ENCODE measurements at regions of chr17 and their contacts with region 1.

Region 1: DNA sequence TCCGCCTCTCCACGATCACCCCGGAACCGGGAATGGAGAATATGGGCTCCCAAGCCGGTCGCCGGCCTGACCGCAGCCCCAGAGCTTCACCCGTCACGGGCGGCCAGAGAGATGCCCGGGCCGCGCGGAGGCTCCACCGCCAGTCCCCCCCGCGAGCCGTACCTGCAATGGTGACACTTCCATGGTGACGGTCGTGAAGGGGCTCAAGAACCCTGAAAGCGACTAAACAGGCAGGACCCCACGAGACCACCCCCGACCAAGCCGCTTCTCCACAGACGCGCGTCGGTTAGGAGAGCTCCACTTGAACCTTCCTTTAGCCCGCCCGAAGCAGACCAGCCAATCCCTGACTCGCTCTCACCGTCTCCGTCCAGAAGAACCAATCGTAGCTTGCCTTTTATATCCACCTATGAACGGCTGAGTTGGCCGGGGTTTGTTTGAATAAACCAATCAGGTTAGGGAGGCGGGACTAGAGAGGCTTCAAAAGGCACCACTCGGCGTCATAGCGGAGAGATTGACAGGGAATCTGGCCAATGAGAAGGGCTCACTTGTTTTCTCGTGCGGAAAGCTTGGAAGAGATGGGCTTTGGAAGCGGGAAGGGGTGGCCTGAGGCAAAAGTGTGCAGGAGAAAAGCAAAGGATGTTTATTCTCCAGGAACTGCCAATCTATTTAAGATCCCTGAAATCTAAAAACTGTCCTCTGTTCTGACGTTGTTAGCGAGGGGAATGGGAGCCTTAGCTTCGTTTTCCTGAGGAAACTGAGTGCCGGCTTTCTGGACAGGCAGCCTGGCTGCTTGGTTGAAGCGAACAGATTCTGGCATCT is at the start of gene TOP2A:
- DNase-seq: peak; percentile 91
- ATAC-seq: peak; percentile 100
- H3K4me3 Mint-ChIP-seq: peak within 1 kb of the TSS; percentile 94
- H3K27ac Mint-ChIP-seq: peak within 1 kb of the TSS; percentile 84
- H3K4me1 Mint-ChIP-seq: peaks cover 23% of the 10 kb centered on the region
- H3K27me3 Mint-ChIP-seq: no peaks in the 10 kb centered on the region
- CTCF ChIP-seq: no peak
- total RNA-seq, gene TOP2A: 5.3 and 6.6 TPM in 2 replicates

Region 2: DNA sequence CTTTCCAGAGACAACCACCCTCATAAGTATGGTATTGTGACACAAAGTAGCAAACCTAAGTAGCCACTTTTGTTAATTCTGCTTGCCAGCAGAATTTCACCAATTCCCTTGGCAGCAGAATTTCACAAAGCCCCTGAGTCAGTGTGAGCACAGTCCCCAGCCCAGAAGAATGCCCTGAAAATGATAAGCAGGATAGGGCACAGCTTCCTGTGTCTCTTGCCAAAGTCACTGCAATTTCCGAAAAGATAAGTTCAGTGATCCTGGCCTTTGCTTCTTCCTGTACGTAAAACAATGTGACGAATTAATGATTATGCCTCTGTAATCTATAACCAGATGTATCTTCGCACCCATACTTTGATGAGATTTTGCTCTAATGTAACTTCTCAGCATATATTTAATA is 214.7 kb before region 1 on chr17:
- CTCF ChIA-PET with region 1: no interaction called
- POLR2A ChIA-PET with region 1: no interaction called
- intact Hi-C with region 1: loop called (anchors 5 kb)
- DNase-seq: no peak
- ATAC-seq: no peak
- H3K4me3 Mint-ChIP-seq: no peak overlapping the region
- H3K27ac Mint-ChIP-seq: no peak overlapping the region
- H3K4me1 Mint-ChIP-seq: peaks cover 4% of the 10 kb centered on the region
- H3K27me3 Mint-ChIP-seq: no peaks in the 10 kb centered on the region
- CTCF ChIP-seq: no peak

Region 3: GRCh38 chr17:40303009-40303657 is 114.7 kb before region 1 on chr17:
- CTCF ChIA-PET with region 1: interaction called, 31 read pairs
- POLR2A ChIA-PET with region 1: interaction called, 3 read pairs
- intact Hi-C with region 1: loop called (anchors 1 kb)
- DNase-seq: no peak
- ATAC-seq: peak; percentile 83
- H3K4me3 Mint-ChIP-seq: no peak overlapping the region
- H3K27ac Mint-ChIP-seq: no peak overlapping the region
- H3K4me1 Mint-ChIP-seq: peaks cover 7% of the 10 kb centered on the region
- H3K27me3 Mint-ChIP-seq: no peaks in the 10 kb centered on the region
- CTCF ChIP-seq: no peak

Region 4: DNA sequence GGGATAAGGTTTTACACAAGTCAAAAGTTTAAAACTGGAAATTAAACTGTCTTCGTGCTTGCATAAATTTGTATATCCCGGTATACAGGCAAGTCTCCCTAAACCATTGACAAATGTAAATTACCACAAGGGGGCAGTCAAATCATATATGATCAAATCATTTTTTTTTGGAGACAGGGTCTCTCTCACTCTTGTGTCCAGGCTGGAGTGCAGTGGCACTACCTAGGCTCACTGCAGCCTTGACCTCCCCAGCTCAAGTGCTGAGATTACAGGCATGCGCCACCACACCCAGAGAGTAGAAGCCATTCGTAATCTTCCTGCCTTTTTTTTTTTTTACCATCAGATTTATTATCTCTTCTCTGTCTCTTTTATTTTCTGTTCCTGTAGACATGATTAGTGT is 18.6 kb before region 1 on chr17:
- CTCF ChIA-PET with region 1: interaction called, 3 read pairs
- POLR2A ChIA-PET with region 1: no interaction called
- intact Hi-C with region 1: loop called (anchors 2 kb)
- DNase-seq: no peak
- ATAC-seq: peak; percentile 61
- H3K4me3 Mint-ChIP-seq: no peak overlapping the region
- H3K27ac Mint-ChIP-seq: no peak overlapping the region
- H3K4me1 Mint-ChIP-seq: peaks cover 15% of the 10 kb centered on the region
- H3K27me3 Mint-ChIP-seq: no peaks in the 10 kb centered on the region
- CTCF ChIP-seq: no peak

Region 5: GRCh38 chr17:40818733-40819527 is 401.1 kb after region 1 on chr17:
- CTCF ChIA-PET with region 1: no interaction called
- POLR2A ChIA-PET with region 1: no interaction called
- intact Hi-C with region 1: loop called (anchors 10 kb)
- DNase-seq: peak; percentile 79
- ATAC-seq: peak; percentile 89
- H3K4me3 Mint-ChIP-seq: peak overlapping the region; percentile 87
- H3K27ac Mint-ChIP-seq: peak overlapping the region; percentile 83
- H3K4me1 Mint-ChIP-seq: peaks cover 10% of the 10 kb centered on the region
- H3K27me3 Mint-ChIP-seq: peaks cover 14% of the 10 kb centered on the region
- CTCF ChIP-seq: no peak

Region 6: DNA sequence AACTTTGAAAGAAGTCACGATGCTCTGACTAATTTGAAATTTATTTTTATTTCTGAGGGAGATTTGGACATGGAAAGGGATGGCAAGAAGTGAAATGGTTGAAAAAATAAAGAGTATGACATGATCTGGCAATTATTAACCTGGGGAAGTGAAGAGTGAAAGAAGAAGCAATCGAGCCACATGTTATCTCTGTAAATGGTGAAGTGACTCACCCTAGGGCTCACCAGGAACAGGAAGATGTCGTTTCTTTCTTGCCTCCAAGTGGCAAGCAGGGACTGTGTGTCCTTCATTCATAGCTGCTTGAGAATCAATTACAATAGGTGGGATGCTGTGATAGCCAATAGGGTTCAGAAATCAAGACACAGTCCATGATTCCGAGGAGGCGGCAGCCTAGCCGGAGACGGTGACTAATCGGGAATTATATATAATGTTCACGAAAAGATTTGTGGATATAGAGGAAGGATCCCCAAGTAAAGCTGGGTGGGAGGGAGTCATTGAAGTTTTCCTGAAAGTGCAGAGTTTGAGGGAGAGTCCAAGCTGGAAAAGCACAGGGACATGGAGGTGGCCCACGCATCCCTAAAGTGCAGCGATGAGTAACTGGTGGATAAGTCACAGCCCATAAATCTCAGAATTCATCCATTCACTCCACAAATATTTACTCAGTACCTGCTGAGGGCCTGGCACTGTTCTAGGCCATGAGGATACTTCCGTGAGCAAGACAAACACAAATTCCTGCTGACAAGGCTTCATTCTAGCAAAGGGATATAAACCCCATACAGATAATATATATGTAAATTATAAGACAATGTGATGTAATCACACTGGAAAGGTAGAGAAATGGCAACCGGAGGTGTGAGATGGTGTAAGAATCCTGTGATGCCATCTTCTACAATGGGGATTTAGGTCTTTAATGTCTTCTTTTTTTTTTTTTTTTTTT is 485.6 kb after region 1 on chr17:
- CTCF ChIA-PET with region 1: no interaction called
- POLR2A ChIA-PET with region 1: no interaction called
- intact Hi-C with region 1: no loop called
- DNase-seq: no peak
- ATAC-seq: peak; percentile 74
- H3K4me3 Mint-ChIP-seq: no peak overlapping the region
- H3K27ac Mint-ChIP-seq: no peak overlapping the region
- H3K4me1 Mint-ChIP-seq: peaks cover 4% of the 10 kb centered on the region
- H3K27me3 Mint-ChIP-seq: peaks cover 22% of the 10 kb centered on the region
- CTCF ChIP-seq: no peak

Measured in activated B cell treated with CpG ODN at 0.5 μM for 24 hours (primary cell).